ENCODE measurements at regions of chr1 and their contacts with region 1.

Region 1: DNA sequence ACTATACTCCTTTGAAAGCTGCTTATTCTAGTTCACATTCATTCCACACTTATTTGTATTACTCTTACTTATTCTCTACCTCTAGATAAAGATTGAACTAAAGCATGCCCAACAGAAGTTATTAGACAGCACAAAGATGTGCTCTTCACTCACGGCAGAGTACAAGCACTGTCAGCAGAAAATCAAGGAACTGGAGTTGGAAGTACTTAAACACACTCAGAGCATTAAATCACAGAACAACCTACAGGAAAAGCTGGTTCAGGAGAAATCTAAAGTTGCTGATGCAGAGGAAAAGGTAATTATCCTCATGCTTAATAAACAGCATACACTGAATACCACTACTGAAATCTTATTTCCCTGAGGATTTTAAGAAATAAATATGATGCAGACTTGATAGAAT is 81.3 kb upstream of the PPIH start:
- DNase-seq: no peak
- H3K4me3 Mint-ChIP-seq: no peak overlapping the region
- H3K27ac Mint-ChIP-seq: no peak overlapping the region
- H3K4me1 Mint-ChIP-seq: no peaks in the 10 kb centered on the region
- H3K27me3 Mint-ChIP-seq: peaks cover 2% of the 10 kb centered on the region

Region 2: DNA sequence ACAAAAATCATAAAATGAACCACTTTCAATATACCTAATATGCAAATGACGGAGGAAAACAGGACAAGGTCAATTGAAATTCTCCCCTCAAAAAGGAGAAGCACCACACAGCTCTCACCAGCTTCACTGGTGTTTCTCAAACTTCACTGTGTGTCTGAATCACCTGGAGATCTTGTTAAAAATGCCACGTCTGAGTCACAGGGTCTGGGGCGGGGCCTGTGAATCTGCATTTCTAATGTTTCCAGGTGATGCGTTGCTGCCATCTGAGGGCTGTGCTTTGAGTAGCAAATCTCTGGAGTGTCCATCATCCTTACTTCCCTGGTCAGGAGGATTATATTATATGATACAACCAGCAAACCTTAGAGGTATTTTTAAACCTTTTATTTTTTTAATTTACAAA is 154.1 kb after region 1 on chr1:
- intact Hi-C with region 1: loop called (anchors 2 kb)
- DNase-seq: no peak
- H3K4me3 Mint-ChIP-seq: no peak overlapping the region
- H3K27ac Mint-ChIP-seq: no peak overlapping the region
- H3K4me1 Mint-ChIP-seq: no peaks in the 10 kb centered on the region
- H3K27me3 Mint-ChIP-seq: no peaks in the 10 kb centered on the region

Region 3: GRCh38 chr1:42747125-42747524 is 170.2 kb after region 1 on chr1:
- intact Hi-C with region 1: loop called (anchors 5 kb)
- DNase-seq: no peak
- H3K4me3 Mint-ChIP-seq: no peak overlapping the region
- H3K27ac Mint-ChIP-seq: no peak overlapping the region
- H3K4me1 Mint-ChIP-seq: no peaks in the 10 kb centered on the region
- H3K27me3 Mint-ChIP-seq: no peaks in the 10 kb centered on the region

Region 4: GRCh38 chr1:43073490-43074230 is 496.7 kb after region 1 on chr1:
- intact Hi-C with region 1: loop called (anchors 5 kb)
- DNase-seq: peak; percentile 55
- H3K4me3 Mint-ChIP-seq: no peak overlapping the region
- H3K27ac Mint-ChIP-seq: no peak overlapping the region
- H3K4me1 Mint-ChIP-seq: peaks cover 4% of the 10 kb centered on the region
- H3K27me3 Mint-ChIP-seq: peaks cover 2% of the 10 kb centered on the region

Measured in activated T-helper 2 cell treated with anti-CD3 and anti-CD28 coated beads, Interferon-gamma antibody, Interleukin-2, Interleukin-4, amounts not matched to agents 10 μg/mL and 5 μg/mL and 100 μg/mL, durations not matched to agents 14 hours and 24 hours and 36 hours (primary cell).